Head of caudate nucleus (tissue), 42 donors: ENCODE measurements at regions of chr3 and their contacts with region 1.

Region 1: GRCh38 chr3:52670621-52671521 is 14.8 kb downstream of the PBRM1 start:
- DNase-seq: no peak

Region 2: DNA sequence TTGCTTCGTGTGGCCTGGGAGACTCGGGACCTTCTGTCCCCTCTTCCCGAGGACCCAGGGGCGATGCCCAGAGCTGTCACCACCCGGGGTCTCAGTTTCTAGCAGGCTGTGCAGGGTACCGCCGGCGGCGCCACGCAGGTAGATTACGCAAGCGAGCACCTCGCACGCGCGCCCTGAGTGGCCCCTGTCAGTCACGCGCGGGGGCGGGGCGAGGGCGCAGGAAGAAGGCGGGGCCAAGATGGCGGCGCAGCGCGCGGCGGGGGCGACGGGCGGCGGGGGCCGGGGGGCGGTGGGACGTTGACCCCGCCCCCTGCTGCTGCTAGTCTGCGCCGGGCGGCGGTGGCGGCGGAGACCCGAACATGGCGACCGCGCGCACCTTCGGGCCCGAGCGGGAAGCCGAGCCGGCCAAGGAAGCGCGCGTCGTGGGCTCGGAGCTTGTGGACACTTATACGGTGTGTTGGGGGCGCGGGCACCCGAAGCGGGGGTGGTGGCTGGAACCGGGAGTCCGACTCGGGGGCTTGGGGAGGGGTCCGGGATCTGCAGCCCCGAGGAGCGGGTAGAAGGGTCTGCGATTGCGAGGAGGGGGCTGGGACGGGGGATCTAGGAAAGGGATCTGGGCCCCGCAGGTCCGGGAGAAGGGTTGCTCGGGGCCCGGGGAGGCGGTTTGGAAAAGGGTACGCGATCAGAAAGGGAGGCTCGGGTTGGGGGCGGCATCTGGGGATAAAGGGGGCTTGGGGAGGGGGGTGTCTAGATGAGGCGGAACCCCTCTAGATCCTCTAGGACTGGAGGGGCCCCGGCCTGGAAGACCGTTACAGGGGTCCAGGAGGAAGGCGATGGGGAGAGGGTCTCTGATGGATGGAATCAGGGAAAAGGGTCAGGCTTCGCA is 215.3 kb before region 1 on chr3 and contains the start of gene NISCH:
- intact Hi-C with region 1: no loop called
- DNase-seq: peak; percentile 67 to 95 (median 90)

Region 3: GRCh38 chr3:52606373-52607085 is 64.3 kb before region 1 on chr3:
- intact Hi-C with region 1: loop called (anchors 10 kb)
- DNase-seq: peak in 23 of 42 donors; percentile 6 to 70 (median 25)

Region 4: DNA sequence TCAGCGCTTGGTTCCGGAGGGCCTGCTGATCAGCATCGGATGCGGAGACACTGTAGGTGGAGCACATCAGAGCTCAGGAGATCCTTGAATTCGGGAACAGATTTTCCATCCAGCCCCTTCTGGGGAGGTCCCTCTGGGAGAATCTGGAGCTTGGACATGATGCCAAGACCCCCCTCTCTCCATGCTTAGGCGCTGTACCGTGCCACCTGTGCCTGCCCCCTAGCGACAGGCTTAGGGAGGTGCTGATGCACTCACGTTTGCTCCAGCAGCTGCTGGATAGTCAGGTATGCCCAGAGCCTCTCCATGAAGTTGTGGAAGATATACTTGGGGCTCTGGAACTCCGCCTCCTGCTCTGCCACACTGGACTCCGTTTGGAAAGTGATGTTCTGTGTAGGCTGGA is 149.9 kb after region 1 on chr3:
- intact Hi-C with region 1: no loop called
- DNase-seq: no peak